MCF 10A (cell line): ENCODE measurements at regions of chr19 and their contacts with region 1.

Region 1: DNA sequence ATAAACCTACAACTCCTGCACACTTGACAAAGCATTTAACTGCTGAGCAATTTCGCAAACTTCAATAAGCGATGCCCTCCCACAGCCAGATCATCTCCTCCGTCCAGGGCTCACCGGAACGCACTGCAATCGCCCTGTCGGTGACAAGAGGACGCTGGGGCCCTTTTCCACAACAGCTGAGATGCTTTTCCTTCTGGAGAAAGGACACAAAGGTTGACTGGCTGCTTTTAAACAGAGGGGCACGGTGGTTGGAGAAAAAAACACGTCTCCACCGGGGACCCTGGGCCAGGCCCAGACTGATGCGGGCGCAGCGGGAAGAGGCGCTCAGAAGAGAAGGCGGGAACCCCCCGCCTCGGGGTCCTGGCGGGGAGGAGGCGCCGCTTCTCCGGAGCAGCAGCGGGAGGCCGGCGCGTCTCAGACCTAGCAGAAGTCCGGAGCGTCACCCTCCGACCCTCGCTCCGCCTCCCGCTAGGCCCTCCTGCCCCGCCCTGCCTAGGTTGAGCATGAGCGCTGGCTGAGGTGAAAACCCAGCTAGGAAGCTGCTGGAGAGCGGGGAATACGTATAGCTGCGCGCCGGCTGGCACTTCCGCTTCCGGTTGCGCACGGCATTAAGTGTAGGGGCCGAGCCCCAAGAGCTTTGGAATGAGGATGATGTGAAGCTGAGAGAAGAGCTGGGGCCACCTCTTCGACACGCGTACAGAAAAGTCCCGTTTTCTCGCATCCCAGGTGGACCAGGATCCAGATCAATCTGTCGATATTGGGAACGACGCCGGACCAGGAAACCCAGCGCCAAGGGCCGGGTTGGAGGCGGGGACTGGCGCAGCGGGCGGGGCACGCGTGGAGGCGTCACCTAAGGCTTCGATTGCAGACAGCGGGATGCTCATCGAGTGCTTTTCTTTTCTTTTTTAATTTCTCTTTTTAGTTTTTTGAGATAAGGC is at the start of gene ZNF846:
- DNase-seq: peak; percentile 97
- H3K4me3 Mint-ChIP-seq: peak within 1 kb of the TSS; percentile 93
- H3K27ac Mint-ChIP-seq: peak within 1 kb of the TSS; percentile 98
- H3K4me1 Mint-ChIP-seq: no peaks in the 10 kb centered on the region
- H3K27me3 Mint-ChIP-seq: no peaks in the 10 kb centered on the region
- CTCF ChIP-seq: no peak
- total RNA-seq, gene ZNF846: 3.2 and 3.3 TPM in 2 replicates

Region 2: DNA sequence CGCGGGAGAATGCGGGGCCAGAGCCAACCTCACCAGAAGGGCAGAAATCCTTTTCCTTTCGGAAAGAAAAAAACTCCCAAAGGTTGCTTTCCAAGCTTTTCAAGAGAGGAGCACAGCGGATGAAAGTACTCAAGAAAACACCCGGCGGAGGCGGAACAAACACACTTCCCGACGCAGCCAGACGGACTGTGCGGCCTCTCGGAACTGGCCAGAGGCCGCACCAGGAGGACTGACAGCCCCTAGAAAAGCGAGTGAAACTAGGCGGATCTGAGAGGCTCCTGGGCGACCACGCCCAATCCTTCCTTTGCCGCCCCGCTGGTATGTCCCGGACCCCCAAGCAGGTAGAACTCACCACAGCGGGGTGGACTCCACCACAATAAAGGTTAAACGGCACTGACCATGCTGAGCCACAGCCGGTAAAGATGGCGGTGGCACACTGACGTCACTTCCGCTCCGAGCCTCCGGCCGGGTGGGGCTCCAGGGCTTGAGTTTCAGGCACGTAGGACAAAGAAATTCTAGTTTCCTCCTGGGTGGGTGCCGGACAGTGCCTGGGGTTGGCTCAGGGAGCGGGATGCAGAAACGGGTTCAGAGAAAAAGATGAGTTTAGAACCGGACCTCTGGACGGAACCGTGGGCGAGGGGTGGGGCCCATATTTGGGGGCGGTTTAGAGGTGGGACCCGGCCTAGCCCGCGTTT is 93.6 kb before region 1 on chr19 and contains the start of gene ZNF562:
- CTCF ChIA-PET with region 1: no interaction called
- POLR2A ChIA-PET with region 1: interaction called, 34 read pairs
- intact Hi-C with region 1: loop called (anchors 1 kb)
- DNase-seq: peak; percentile 89
- H3K4me3 Mint-ChIP-seq: peak within 1 kb of the TSS; percentile 95
- H3K27ac Mint-ChIP-seq: peak within 1 kb of the TSS; percentile 99
- H3K4me1 Mint-ChIP-seq: peaks cover 11% of the 10 kb centered on the region
- H3K27me3 Mint-ChIP-seq: no peaks in the 10 kb centered on the region
- CTCF ChIP-seq: no peak
- total RNA-seq, gene ZNF562: 56.4 and 56.5 TPM in 2 replicates

Region 3: DNA sequence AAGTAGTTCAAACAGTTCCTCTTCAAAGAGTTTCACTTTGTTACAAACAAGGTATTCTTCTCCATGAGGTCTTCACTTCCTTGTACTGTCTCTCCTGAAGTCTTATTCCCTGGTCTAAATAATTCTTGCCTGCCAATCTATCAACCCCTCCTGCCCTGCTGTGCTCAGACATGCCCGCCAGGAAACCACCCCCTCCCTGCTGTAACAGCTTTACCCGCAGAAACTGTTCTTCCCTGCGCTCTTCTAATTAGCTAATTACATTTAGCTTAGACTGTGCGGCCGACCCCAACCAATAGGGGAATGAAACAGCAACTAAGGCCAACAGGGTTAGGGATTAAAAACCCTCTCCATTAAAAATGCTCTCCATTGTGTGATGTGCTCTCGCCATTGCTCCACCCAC is 46.6 kb before region 1 on chr19:
- CTCF ChIA-PET with region 1: no interaction called
- POLR2A ChIA-PET with region 1: interaction called, 14 read pairs
- intact Hi-C with region 1: no loop called
- DNase-seq: peak; percentile 11
- H3K4me3 Mint-ChIP-seq: peak overlapping the region; percentile 27
- H3K27ac Mint-ChIP-seq: peak overlapping the region; percentile 62
- H3K4me1 Mint-ChIP-seq: peaks cover 9% of the 10 kb centered on the region
- H3K27me3 Mint-ChIP-seq: no peaks in the 10 kb centered on the region
- CTCF ChIP-seq: no peak

Region 4: GRCh38 chr19:9785367-9786331 is 17.2 kb after region 1 on chr19:
- CTCF ChIA-PET with region 1: no interaction called
- POLR2A ChIA-PET with region 1: interaction called, 5 read pairs
- intact Hi-C with region 1: loop called (anchors 2 kb)
- DNase-seq: peak; percentile 85
- H3K4me3 Mint-ChIP-seq: peak overlapping the region; percentile 93
- H3K27ac Mint-ChIP-seq: peak overlapping the region; percentile 71
- H3K4me1 Mint-ChIP-seq: peaks cover 16% of the 10 kb centered on the region
- H3K27me3 Mint-ChIP-seq: no peaks in the 10 kb centered on the region
- CTCF ChIP-seq: no peak

Region 5: GRCh38 chr19:9827289-9828238 is 59.1 kb after region 1 on chr19 and contains the start of gene UBL5:
- CTCF ChIA-PET with region 1: no interaction called
- POLR2A ChIA-PET with region 1: interaction called, 33 read pairs
- intact Hi-C with region 1: no loop called
- DNase-seq: peak; percentile 93
- H3K4me3 Mint-ChIP-seq: peak within 1 kb of the TSS; percentile 90
- H3K27ac Mint-ChIP-seq: peak within 1 kb of the TSS; percentile 97
- H3K4me1 Mint-ChIP-seq: peaks cover 6% of the 10 kb centered on the region
- H3K27me3 Mint-ChIP-seq: no peaks in the 10 kb centered on the region
- CTCF ChIP-seq: no peak
- total RNA-seq, gene UBL5: 302 and 374 TPM in 2 replicates